MCF 10A (cell line): ENCODE measurements at regions of chr18 and their contacts with region 1.

Region 1: GRCh38 chr18:63131106-63131958 is 188.2 kb downstream of the BCL2 start:
- DNase-seq: peak; percentile 65
- H3K4me3 Mint-ChIP-seq: no peak overlapping the region
- H3K27ac Mint-ChIP-seq: no peak overlapping the region
- H3K4me1 Mint-ChIP-seq: no peaks in the 10 kb centered on the region
- H3K27me3 Mint-ChIP-seq: peaks cover 7% of the 10 kb centered on the region
- CTCF ChIP-seq: peak; percentile 52

Region 2: GRCh38 chr18:63155169-63155852 is 24.0 kb after region 1 on chr18:
- CTCF ChIA-PET with region 1: interaction called, 13 read pairs
- POLR2A ChIA-PET with region 1: no interaction called
- intact Hi-C with region 1: no loop called
- DNase-seq: peak; percentile 71
- H3K4me3 Mint-ChIP-seq: peak overlapping the region; percentile 72
- H3K27ac Mint-ChIP-seq: no peak overlapping the region
- H3K4me1 Mint-ChIP-seq: peaks cover 8% of the 10 kb centered on the region
- H3K27me3 Mint-ChIP-seq: peaks cover 10% of the 10 kb centered on the region
- CTCF ChIP-seq: peak; percentile 58

Region 3: GRCh38 chr18:63320046-63320689 is 188.8 kb after region 1 on chr18:
- CTCF ChIA-PET with region 1: interaction called, 29 read pairs
- POLR2A ChIA-PET with region 1: interaction called, 15 read pairs
- intact Hi-C with region 1: loop called (anchors 1 kb)
- DNase-seq: peak; percentile 83
- H3K4me3 Mint-ChIP-seq: peak overlapping the region; percentile 96
- H3K27ac Mint-ChIP-seq: no peak overlapping the region
- H3K4me1 Mint-ChIP-seq: peaks cover 23% of the 10 kb centered on the region
- H3K27me3 Mint-ChIP-seq: no peaks in the 10 kb centered on the region
- CTCF ChIP-seq: no peak

Region 4: DNA sequence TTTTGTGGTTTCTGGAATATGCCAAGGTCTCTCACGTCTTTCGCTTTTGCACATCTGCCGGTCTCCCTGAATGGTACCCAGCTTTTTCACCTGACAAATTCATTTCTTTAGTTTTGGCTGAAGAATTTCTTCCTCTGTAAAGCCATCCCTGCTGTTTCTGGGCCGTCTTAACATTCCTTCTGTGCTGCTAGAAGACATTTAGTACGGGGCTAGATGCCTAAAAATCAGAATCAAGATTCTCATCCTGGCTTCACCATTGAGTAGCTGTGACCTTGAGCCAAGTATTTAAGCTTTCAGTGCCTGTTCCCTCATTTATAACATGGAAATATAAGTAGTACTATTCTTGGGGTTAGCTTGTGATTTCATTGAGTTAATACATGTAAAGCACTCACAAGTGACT is 194.7 kb after region 1 on chr18:
- CTCF ChIA-PET with region 1: interaction called, 29 read pairs
- POLR2A ChIA-PET with region 1: interaction called, 15 read pairs
- intact Hi-C with region 1: loop called (anchors 1 kb)
- DNase-seq: no peak
- H3K4me3 Mint-ChIP-seq: no peak overlapping the region
- H3K27ac Mint-ChIP-seq: no peak overlapping the region
- H3K4me1 Mint-ChIP-seq: peaks cover 8% of the 10 kb centered on the region
- H3K27me3 Mint-ChIP-seq: no peaks in the 10 kb centered on the region
- CTCF ChIP-seq: no peak

Region 5: GRCh38 chr18:63339920-63340484 is 208.7 kb after region 1 on chr18:
- CTCF ChIA-PET with region 1: interaction called, 16 read pairs
- POLR2A ChIA-PET with region 1: no interaction called
- intact Hi-C with region 1: no loop called
- DNase-seq: peak; percentile 37
- H3K4me3 Mint-ChIP-seq: no peak overlapping the region
- H3K27ac Mint-ChIP-seq: no peak overlapping the region
- H3K4me1 Mint-ChIP-seq: peaks cover 21% of the 10 kb centered on the region
- H3K27me3 Mint-ChIP-seq: no peaks in the 10 kb centered on the region
- CTCF ChIP-seq: peak; percentile 46